ENCODE measurements at regions of chr7 and their contacts with region 1.

Region 1: DNA sequence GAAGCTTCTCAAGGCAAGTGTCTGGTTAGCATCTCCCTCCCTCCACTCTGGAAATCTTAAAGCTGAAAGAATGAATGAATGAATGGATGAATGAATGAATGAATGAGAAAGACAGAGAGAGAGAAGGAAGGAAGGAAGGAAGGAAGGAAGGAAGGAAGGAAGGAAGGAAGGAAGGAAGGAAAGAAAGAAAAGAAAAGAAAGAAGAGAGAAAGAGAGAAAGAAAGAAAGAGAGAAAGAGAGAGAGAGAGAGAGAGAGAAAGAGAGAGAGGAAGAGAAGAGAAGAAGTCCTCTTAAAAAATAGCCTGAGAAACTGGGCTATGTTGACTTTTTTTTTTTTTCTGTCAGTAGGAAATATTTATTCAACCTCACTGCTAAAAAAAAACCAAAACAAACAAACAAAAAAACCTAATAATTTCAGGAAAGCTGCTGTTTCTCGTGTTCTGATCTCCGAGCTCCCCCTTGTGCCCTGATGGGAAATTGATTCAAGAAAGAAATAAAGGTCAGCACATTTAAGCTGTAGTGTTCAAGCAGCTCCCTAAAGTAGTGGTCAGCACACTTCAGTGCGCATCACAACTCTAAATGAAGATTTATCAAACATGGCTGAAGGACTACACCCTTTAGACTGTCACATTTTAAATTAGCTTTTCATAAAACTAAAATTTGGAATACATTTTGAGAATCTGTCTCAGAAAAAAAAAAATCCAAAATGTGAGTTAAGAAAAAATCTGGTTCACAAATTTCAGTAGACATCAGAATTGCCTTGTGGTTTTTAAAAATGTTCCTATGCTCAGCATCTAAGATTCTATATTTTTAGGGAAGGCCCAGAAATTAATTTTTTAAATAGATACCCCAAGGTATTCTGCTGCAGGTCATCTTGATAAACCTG is 154.3 kb downstream of the ELAPOR2 start:
- DNase-seq: no peak
- ATAC-seq: no peak

Region 2: GRCh38 chr7:85882335-85882734 is 1022.9 kb before region 1 on chr7:
- intact Hi-C with region 1: loop called in 1 of 2 experiments (anchors 10 kb)
- DNase-seq: no peak
- ATAC-seq: no peak

Region 3: GRCh38 chr7:86846494-86847190 is 58.5 kb before region 1 on chr7:
- intact Hi-C with region 1: no loop called
- DNase-seq: no peak
- ATAC-seq: no peak

Measured in left cardiac atrium (tissue), 4 donors.